Dorsolateral prefrontal cortex (tissue), 120 donors: ENCODE measurements at regions of chr11 and their contacts with region 1.

Region 1: GRCh38 chr11:65961232-65961901 is at the start of gene SART1:
- DNase-seq: peak; percentile 95 to 98 (median 97)
- H3K4me3 ChIP-seq: peak within 1 kb of the TSS; percentile 69 to 100 (median 98)
- H3K27ac ChIP-seq: peak within 1 kb of the TSS; percentile 64 to 98 (median 92)
- H3K27me3 ChIP-seq: no peaks in the 10 kb centered on the region
- CTCF ChIP-seq: peak in 51 of 56 donors; percentile 15 to 70 (median 45)
- total RNA-seq, gene SART1: 31.8 to 73.9 (median 52.1) TPM

Region 2: GRCh38 chr11:65540297-65541092 is 420.9 kb before region 1 on chr11:
- intact Hi-C with region 1: loop called in 1 of 2 experiments (anchors 10 kb)
- DNase-seq: peak; percentile 81 to 94 (median 90)
- H3K4me3 ChIP-seq: peak overlapping the region; percentile 25 to 84 (median 59)
- H3K27ac ChIP-seq: peak overlapping the region; percentile 77 to 99 (median 94)
- H3K27me3 ChIP-seq: no peaks in the 10 kb centered on the region
- CTCF ChIP-seq: peak; percentile 63 to 95 (median 81)

Region 3: DNA sequence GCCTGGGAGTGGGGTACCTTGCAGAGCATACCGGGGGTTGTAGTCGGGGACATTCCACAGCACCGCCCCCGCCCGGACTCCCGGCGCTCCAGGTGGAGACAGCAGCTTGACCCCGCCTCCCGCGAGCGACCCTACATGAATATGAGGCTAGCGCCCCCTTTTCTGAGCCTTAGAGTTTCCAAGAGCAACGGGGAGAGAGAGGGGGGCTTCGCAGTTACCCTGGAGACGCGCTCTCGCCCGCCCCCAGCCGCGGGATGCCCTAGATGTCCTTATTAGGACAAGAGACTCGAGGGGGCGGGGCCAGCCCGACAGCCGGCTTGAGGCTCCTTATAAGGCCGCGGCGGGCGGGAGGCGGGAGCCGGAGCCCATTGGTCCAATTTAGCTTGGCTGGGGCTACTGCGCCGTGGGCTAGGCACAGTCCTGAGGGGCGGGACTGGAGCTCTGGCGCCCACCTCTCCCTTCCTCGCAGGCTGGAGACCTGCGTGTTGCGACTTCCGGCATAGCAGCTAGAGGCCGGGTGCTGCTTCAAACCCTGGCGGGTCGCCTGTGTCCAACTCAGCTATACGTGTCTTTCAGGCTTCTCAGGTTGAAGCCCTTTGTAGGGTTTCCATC is 102.1 kb before region 1 on chr11:
- intact Hi-C with region 1: loop called (anchors 1 to 2 kb)
- DNase-seq: peak; percentile 94 to 99 (median 98)
- H3K4me3 ChIP-seq: peak overlapping the region; percentile 65 to 99 (median 93)
- H3K27ac ChIP-seq: peak overlapping the region; percentile 70 to 99 (median 97)
- H3K27me3 ChIP-seq: no peaks in the 10 kb centered on the region
- CTCF ChIP-seq: peak in 28 of 56 donors; percentile 6 to 56 (median 34)

Region 4: GRCh38 chr11:65919146-65920033 is 42.0 kb before region 1 on chr11 and contains the start of gene DRAP1:
- intact Hi-C with region 1: loop called (anchors 1 kb)
- DNase-seq: peak; percentile 97 to 100 (median 100)
- H3K4me3 ChIP-seq: peak within 1 kb of the TSS; percentile 73 to 100 (median 98)
- H3K27ac ChIP-seq: peak within 1 kb of the TSS; percentile 72 to 99 (median 95)
- H3K27me3 ChIP-seq: no peaks in the 10 kb centered on the region
- CTCF ChIP-seq: peak in 37 of 56 donors; percentile 7 to 61 (median 34)
- total RNA-seq, gene DRAP1: 54.9 to 148 (median 96.3) TPM

Region 5: GRCh38 chr11:66001942-66002647 is 40.7 kb after region 1 on chr11 and contains the starts of genes BANF1 and EIF1AD:
- intact Hi-C with region 1: loop called (anchors 1 kb)
- DNase-seq: peak; percentile 82 to 96 (median 92)
- H3K4me3 ChIP-seq: peak within 1 kb of the TSS; percentile 72 to 100 (median 93)
- H3K27ac ChIP-seq: peak within 1 kb of the TSS; percentile 78 to 99 (median 96)
- H3K27me3 ChIP-seq: no peaks in the 10 kb centered on the region
- CTCF ChIP-seq: peak in 32 of 56 donors; percentile 4 to 56 (median 30)
- total RNA-seq, gene BANF1: 89.7 to 186 (median 129) TPM
- total RNA-seq, gene EIF1AD: 25.8 to 57.5 (median 36.4) TPM